ENCODE measurements at regions of chr2 and their contacts with region 1.

Region 1: GRCh38 chr2:159615140-159615951 is 1.0 kb downstream of the BAZ2B start:
- DNase-seq: peak; percentile 52 to 90
- H3K4me3 ChIP-seq: peak overlapping the region; percentile 77 to 81
- H3K27ac ChIP-seq: peak overlapping the region; percentile 94 to 97
- H3K4me1 ChIP-seq: peaks cover 2 to 15% of the 10 kb centered on the region in 2 donors
- H3K27me3 ChIP-seq: no peaks in the 10 kb centered on the region
- CTCF ChIP-seq: no peak

Region 2: DNA sequence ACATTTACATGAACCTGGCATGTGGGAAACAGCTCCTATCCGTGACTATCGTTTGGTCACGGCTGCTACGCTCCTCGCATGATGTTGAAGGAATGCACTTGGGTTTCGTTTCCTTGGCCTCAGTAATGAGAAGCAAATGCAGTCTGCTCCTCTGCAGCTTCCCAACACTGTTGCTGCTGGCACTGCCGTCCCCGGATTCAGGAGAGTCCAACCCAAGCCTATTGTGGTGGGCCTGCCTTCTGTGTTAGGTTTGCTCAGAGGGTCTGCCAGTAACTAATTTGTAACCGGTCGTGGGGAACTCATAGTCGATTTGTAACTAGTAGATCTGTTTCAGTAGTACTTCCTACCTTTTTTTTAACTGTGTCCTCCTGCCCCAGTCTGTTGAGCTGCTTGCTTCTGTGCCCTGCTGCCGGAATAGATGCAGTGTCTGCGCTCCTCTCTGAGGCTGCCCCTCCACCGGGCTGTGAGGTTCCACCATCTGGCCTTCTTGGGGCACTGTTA is 387.2 kb before region 1 on chr2:
- intact Hi-C with region 1: no loop called
- DNase-seq: no peak
- H3K4me3 ChIP-seq: no peak overlapping the region
- H3K27ac ChIP-seq: peak overlapping the region in 1 of 2 donors; percentile 20
- H3K4me1 ChIP-seq: no peaks in the 10 kb centered on the region
- H3K27me3 ChIP-seq: no peaks in the 10 kb centered on the region
- CTCF ChIP-seq: no peak

Region 3: DNA sequence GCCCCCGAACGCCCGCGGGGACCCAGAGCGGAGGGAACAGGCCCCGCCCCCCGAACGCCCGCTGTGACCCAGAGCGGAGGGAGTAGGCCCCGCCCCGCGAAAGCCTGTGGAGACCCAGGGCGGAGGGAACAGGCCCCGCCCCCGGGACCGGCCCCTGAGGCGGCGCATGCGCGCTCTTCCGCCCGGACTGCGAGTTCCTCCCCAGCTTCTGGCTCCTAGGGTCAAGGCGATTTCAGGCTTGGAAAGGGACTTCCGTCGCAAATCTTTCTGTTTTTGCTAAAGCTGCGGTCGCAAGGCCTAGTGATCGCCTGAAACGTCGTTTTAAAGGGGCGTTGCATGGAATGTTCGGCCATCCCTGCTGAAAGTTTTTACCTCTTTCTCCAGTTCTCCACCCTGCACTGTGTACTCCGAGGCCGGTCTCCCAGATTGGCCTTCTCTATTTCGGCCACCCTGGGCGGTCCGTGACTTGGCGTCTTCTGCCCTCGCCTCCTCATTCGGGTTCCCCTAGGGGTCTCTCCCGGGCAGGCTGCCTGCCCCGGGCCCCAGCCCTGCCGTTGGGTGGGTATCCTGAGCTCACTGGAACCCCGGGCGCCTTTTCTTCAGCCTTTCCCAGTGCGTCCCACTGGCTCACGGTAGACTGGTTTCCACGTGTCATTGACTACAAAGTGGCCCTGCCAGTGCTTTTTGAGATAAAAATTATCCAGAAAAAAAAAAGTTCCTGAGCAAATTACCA is 328.5 kb before region 1 on chr2:
- intact Hi-C with region 1: loop called (anchors 5 kb)
- DNase-seq: peak; percentile 92 to 99
- H3K4me3 ChIP-seq: peak overlapping the region; percentile 88 to 96
- H3K27ac ChIP-seq: peak overlapping the region; percentile 86 to 87
- H3K4me1 ChIP-seq: peaks cover 4 to 6% of the 10 kb centered on the region in 2 donors
- H3K27me3 ChIP-seq: no peaks in the 10 kb centered on the region
- CTCF ChIP-seq: no peak

Region 4: GRCh38 chr2:159456491-159457426 is 158.6 kb before region 1 on chr2:
- intact Hi-C with region 1: loop called (anchors 10 kb)
- DNase-seq: no peak
- H3K4me3 ChIP-seq: no peak overlapping the region
- H3K27ac ChIP-seq: no peak overlapping the region
- H3K4me1 ChIP-seq: peaks cover 0 to 23% of the 10 kb centered on the region in 2 donors
- H3K27me3 ChIP-seq: no peaks in the 10 kb centered on the region
- CTCF ChIP-seq: no peak

Region 5: GRCh38 chr2:159516241-159516766 is 99.0 kb before region 1 on chr2:
- intact Hi-C with region 1: loop called (anchors 10 kb)
- DNase-seq: no peak
- H3K4me3 ChIP-seq: peak overlapping the region; percentile 51 to 55
- H3K27ac ChIP-seq: peak overlapping the region; percentile 17 to 41
- H3K4me1 ChIP-seq: peaks cover 0 to 13% of the 10 kb centered on the region in 2 donors
- H3K27me3 ChIP-seq: no peaks in the 10 kb centered on the region
- CTCF ChIP-seq: no peak

Region 6: DNA sequence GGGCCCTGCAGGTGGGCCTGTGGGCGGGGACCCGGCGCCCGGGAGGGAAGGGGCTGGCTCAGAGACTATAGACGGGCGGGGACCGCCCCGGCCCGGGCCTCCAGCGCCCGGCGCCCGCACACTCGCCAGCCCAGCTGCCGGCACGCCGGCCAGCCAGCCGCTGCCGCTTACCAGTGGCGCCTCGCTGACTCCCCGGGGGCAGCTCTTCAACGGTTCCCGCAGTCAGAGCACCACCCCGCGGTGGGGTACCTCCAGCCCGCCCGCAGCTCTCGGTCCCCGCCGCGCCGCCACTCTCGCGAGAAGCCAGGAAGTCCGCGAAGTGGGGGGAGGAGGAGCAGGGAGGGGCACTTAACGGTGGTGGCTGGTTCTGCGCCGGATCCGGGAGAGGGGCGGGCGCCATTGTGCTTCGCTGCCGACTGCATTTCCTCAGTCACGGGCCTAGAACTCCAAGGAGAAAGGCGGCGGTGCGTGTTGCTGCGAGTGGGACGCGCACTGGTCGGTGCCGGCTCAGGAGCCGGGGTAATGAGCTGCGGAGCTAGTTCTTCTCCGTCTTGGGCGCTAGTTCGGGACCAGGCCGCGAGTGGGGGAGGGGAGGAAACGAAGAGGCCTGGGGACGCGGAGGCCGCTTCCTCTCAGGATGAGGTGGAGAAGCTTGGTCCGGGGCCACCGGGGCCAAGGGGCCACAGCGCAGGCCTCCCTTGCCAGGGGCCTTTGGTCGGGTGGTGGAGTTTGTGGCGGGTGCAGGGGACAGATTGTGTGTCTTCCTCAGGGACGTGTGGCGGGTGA is 97.0 kb after region 1 on chr2 and contains the start of gene MARCHF7:
- intact Hi-C with region 1: loop called (anchors 1 kb)
- DNase-seq: peak; percentile 82 to 98
- H3K4me3 ChIP-seq: peak within 1 kb of the TSS; percentile 82 to 94
- H3K27ac ChIP-seq: peak within 1 kb of the TSS; percentile 97 to 98
- H3K4me1 ChIP-seq: peaks cover 3 to 31% of the 10 kb centered on the region in 2 donors
- H3K27me3 ChIP-seq: no peaks in the 10 kb centered on the region
- CTCF ChIP-seq: peak; percentile 16 to 51 (median 36)
- total RNA-seq, gene MARCHF7: 49.4 TPM

Region 7: GRCh38 chr2:159797543-159798375 is 182.4 kb after region 1 on chr2 and contains the start of gene CD302:
- intact Hi-C with region 1: loop called (anchors 10 kb)
- DNase-seq: peak in 1 of 2 donors; percentile 84
- H3K4me3 ChIP-seq: peak within 1 kb of the TSS; percentile 75 to 98
- H3K27ac ChIP-seq: peak within 1 kb of the TSS; percentile 87 to 88
- H3K4me1 ChIP-seq: peaks cover 0 to 14% of the 10 kb centered on the region in 2 donors
- H3K27me3 ChIP-seq: no peaks in the 10 kb centered on the region
- CTCF ChIP-seq: no peak
- total RNA-seq, gene CD302: 30.9 TPM

Region 8: GRCh38 chr2:160051374-160051800 is 436.0 kb after region 1 on chr2:
- intact Hi-C with region 1: no loop called
- DNase-seq: no peak
- H3K4me3 ChIP-seq: no peak overlapping the region
- H3K27ac ChIP-seq: no peak overlapping the region
- H3K4me1 ChIP-seq: peaks cover 0 to 10% of the 10 kb centered on the region in 2 donors
- H3K27me3 ChIP-seq: no peaks in the 10 kb centered on the region
- CTCF ChIP-seq: no peak

Measured in ascending aorta (tissue), 2 donors.